Cardiac septum (tissue), 1 donor: ENCODE measurements at regions of chr4 and their contacts with region 1.

Region 1: DNA sequence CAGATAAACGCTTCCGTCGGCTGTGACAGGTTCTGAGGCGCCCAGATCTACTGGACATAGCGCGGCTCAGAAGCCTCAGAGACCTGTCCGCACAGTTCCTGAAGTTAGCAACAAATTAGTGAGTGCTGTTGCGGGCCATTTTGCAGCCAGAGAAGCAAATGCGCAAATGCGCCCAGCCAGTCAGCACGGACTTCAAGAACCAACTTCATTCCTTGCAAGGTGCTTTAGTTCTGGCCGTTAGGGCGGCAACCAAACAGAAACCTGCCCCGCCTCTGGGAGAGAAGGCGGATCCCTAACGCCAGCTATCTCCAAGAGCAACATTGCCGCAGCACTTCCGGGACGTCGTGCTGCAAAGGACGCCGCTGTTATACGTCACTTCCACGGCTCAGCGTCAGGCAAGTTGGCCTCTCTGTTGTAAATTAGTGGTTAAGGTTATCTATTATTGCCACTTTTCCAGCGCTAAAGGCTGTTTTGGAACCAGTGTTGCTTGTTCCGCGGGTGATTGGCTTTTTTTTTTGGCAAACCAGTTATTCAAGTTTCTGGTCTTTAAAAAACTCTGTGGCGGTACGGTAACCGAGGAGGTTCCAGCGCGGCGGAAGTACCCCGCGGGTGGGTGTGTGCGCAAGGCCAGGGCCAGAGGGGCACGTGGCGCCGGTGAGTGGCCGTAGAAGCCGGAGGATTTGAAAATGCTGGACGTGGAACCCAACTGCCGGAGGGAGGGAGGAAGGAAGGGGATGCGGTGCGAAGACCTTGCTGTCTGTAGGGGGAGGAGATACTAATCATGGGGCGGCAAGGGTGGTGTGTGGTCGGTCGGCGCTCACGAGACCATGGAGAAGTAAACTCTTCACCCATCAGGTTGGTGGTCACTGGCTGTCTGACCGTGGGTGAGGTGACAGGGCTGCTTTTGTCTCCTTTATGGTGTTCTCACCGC is at the start of gene GAR1:
- DNase-seq: peak; percentile 96
- total RNA-seq, gene GAR1: 7.9 TPM

Region 2: DNA sequence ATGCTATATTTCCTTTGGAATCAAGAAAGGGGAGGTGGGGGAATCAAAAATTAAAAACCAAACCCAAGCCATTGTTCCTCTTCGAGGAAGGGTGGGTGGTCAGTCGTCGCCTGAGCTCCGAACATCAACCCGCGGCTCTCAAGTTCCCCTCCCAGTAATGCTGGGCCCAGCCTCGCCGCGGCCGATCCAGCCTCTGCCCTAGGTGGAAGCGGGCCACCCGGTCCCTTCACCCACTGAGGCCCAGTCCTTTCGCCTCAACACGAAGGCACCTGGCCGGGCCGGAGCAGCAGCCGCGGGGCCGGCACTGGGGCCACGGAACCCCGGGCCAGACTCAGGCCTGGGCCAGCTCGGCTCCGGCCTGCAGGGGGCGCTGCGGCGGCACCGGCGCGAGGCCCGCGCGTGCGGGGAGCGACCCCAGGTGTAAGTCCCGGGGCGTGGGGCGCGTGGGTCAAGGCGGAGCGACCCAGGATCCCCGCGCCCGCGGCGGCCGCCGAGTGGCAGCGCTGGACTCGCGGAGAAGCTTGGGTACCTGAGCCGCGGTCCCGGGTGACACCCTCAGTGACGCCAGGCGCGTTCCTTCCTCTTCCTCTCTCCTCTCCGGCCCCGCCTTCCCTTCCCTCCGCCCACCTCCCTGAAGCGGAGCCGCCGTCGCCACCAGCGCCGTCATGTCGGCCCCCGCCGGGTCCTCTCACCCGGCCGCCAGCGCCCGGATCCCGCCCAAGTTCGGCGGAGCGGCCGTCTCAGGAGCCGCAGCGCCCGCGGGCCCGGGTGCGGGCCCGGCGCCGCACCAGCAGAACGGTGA is 382.0 kb before region 1 on chr4 and contains the start of gene SEC24B:
- intact Hi-C with region 1: loop called (anchors 2 kb)
- DNase-seq: peak; percentile 97
- total RNA-seq, gene SEC24B: 26.6 TPM

Region 3: DNA sequence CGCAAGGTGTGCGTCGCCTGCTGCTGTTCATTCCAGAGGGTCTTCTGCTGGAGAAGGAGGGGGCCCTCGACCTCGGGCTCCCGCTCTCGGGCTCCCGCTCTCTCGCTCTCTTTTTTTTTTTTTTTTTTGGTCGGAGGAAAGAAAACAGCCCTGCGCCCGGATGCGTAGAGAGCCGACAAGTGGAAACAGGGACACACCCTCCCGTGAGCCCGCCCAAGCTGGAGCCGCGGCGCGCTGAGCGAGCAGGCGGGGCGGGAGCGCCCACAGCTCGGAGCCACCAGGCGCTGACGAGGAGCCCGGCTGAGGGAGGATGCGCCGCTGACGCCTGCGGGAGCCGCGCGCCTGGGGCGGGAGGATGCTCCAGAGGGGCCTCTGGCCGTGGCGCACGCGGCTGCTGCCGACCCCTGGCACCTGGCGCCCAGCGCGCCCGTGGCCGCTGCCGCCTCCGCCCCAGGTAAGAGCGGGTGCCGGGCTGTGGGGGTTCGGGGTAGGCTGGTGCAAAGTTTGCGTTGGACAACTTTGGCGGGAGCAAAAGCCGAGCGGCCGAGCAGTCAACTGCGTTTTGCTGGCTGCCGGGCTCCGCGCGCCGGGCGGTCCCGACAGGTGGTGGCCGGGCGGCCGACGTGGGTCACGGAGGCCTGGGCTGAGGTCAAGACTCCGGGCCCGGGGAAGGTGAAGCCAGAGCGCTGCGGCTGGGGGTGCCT is 255.3 kb before region 1 on chr4 and contains the start of gene MCUB:
- intact Hi-C with region 1: loop called (anchors 10 kb)
- DNase-seq: peak; percentile 92
- total RNA-seq, gene MCUB: 6.6 TPM

Region 4: DNA sequence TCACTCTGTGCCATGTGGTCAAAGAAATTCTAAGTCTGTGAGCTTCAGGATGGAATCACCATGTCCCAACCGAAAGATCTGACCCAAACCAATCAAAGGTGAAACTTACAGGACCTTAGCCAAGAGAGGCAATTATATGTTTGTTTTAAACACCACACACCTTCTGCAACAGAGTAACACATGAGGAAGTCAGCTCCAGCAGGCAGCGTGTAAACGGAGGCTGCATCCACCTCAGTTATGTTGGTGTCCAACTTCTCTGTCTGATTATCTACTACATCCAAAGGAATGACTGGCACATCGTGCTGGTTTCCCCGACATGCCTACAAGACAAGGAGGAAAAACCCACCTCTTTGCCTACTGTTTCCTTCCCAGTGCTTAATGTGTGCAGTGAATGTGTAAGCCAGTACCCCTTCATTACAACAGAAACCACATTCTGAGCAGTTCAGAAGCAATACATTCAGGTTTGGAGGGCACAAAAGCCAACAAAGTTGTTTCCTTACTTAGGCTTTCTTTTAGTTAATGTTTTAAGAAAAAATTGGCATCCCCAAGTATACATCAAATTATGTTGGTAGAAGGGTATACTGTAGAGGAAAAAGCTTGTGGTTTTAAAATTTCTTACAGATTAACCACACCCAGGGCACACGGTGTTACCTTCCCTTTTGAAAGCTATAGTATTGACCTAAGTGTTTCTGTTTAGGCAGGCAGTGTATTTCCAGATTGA is 124.6 kb before region 1 on chr4:
- intact Hi-C with region 1: no loop called
- DNase-seq: no peak

Region 5: DNA sequence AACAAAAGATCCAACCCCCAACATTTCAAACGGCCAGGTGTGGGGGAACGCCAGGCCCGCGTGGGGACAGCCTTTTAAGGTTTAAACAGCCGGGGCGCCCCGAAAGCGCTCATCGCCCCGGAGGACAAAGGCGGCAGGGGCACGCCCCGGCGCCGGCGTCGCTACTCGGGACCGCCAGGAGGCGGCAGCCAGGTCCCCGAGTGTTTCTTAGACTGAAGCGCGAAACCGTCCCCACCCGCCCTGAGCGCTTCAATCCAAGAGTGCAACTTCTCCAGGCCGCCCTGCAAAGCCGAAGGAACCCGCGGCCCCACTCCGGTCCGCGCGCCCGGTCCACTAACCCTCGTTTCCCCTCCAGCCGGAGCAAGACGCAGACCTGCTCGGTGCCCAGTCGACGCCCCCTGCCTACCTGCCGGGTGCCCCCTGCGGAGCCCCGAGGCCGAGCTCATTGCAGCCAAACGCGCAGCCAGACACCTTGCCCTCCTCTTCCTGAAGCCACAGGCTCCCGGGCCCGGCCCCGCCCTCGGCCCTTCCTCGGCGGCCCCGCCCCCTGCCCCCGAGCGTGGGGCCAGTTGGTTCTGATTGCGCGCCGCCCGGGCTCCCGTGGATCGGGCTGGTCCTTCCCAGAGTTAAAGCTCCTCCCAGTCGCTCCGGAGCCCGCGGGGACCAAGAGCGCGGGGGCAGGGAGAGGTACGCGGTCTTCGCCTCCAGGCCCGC is 112.3 kb before region 1 on chr4 and contains the start of gene CASP6:
- intact Hi-C with region 1: loop called (anchors 5 kb)
- DNase-seq: peak; percentile 93
- total RNA-seq, gene CASP6: 3.8 TPM

Region 6: DNA sequence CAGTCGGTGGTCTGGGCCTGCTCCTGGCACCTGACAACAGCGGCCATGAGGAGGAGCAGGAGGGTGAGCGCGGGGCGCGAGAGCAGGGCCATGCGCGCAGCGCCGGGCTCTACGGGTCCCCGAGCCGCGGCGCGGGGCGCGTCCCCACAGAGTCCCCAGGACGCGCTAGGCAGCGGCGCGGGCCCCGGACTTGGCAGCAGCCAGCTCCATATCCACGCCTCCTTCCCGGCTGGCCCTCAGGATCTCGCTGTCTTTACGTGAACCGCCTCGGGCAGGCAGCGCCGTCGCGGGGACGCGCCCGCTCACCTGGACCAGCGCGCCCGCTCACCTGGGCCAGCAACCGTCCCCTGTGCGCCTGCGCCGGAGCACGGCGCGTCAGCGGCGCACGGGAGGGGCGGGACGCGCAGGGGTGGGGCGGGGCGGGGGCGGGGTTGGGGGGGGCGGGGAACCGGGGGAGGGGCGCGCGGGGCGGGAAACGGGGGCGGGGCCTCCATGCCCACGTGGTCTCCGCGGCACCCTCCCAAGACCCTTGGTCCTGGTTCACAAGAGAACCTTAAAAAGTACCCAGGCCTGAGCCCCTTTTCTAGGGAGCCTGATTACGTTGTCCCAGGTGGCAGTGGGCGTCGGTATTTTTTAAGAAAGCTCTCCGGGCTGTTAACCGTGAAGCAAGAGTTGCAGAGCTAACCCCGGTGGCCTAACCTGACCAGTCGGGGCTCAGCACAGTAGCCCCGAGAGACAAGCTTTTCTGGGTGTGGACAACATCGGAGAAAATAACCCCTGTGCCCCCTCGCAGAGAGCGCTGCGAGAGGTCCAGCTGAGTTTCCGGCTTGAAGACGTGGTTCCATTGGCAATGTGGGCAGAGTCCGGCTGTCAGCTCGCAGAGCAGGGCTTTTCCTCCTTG is 85.4 kb before region 1 on chr4 and contains the start of gene PLA2G12A:
- intact Hi-C with region 1: loop called (anchors 1 kb)
- DNase-seq: peak; percentile 84
- total RNA-seq, gene PLA2G12A: 37.7 TPM

Region 7: DNA sequence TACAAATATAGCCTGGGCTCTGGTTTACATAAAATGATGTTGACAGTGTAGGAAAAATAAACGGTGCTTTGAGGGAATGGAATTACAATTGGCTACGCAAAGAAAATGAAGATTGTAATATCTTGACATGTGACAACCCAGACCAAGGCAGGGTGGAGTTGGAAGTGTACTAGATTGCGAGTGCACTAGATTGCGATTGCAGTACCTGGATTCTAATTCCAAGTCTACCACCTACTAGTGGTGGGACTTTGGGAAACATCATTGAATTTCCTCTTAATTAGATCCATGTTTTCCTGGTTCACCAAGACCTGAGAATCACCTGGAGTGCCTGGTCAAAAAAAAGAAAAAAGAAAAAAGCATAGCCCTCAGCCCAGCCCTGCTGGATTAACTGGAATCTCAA is 115.9 kb after region 1 on chr4:
- intact Hi-C with region 1: no loop called
- DNase-seq: no peak

Region 8: GRCh38 chr4:109977854-109978501 is 162.6 kb after region 1 on chr4:
- intact Hi-C with region 1: loop called (anchors 10 kb)
- DNase-seq: no peak